ENCODE measurements at regions of chrX and their contacts with region 1.

Region 1: GRCh38 chrX:74382613-74383012 is 38.7 kb upstream of the SLC16A2 start:
- DNase-seq: peak; percentile 17 to 68
- H3K4me3 ChIP-seq: no peak overlapping the region
- H3K27ac ChIP-seq: no peak overlapping the region
- H3K4me1 ChIP-seq: peaks cover 0 to 3% (median 0%) of the 10 kb centered on the region in 4 experiments; a peak in 1 of 7 replicates
- H3K27me3 ChIP-seq: no peaks in the 10 kb centered on the region
- CTCF ChIP-seq: peak; percentile 11 to 72 (median 57)
- EP300 ChIP-seq: no peak
- POLR2A ChIP-seq: no peak
- RAD21 ChIP-seq: peak; percentile 56 to 68

Region 2: GRCh38 chrX:74492720-74493201 is 110.1 kb after region 1 on chrX:
- CTCF ChIA-PET with region 1: interaction called, 12 read pairs
- POLR2A ChIA-PET with region 1: no interaction called
- DNase-seq: peak in 1 of 2 experiments; percentile 66
- H3K4me3 ChIP-seq: no peak overlapping the region
- H3K27ac ChIP-seq: no peak overlapping the region
- H3K4me1 ChIP-seq: peaks cover 1 to 11% (median 5%) of the 10 kb centered on the region in 4 experiments; a peak in 5 of 7 replicates
- H3K27me3 ChIP-seq: no peaks in the 10 kb centered on the region
- CTCF ChIP-seq: peak; percentile 51 to 57 (median 53)
- EP300 ChIP-seq: no peak
- POLR2A ChIP-seq: no peak
- RAD21 ChIP-seq: peak; percentile 41 to 58

Region 3: GRCh38 chrX:74550295-74550802 is 167.7 kb after region 1 on chrX:
- CTCF ChIA-PET with region 1: interaction called, 11 read pairs
- POLR2A ChIA-PET with region 1: no interaction called
- DNase-seq: peak in 1 of 2 experiments; percentile 86
- H3K4me3 ChIP-seq: no peak overlapping the region
- H3K27ac ChIP-seq: no peak overlapping the region
- H3K4me1 ChIP-seq: no peaks in the 10 kb centered on the region
- H3K27me3 ChIP-seq: no peaks in the 10 kb centered on the region
- CTCF ChIP-seq: peak; percentile 86 to 99 (median 98)
- EP300 ChIP-seq: no peak
- POLR2A ChIP-seq: no peak
- RAD21 ChIP-seq: peak; percentile 92 to 93

Measured in H1 (cell line).